ENCODE measurements at regions of chr3 and their contacts with region 1.

Region 1: GRCh38 chr3:14178247-14179113 is at the starts of genes LSM3 and XPC:
- DNase-seq: peak; percentile 97
- ATAC-seq: peak; percentile 99 to 100 (median 100)
- H3K4me3 ChIP-seq: peak within 1 kb of the TSS; percentile 54 to 87 (median 75)
- H3K27ac ChIP-seq: peak within 1 kb of the TSS; percentile 81 to 97 (median 94)
- H3K4me1 ChIP-seq: peaks cover 5 to 50% (median 29%) of the 10 kb centered on the region in 9 donors
- H3K27me3 ChIP-seq: no peaks in the 10 kb centered on the region
- CTCF ChIP-seq: no peak
- total RNA-seq, gene LSM3: 12.4 to 18.0 (median 15.2) TPM
- total RNA-seq, gene XPC: 8.5 to 15.8 (median 11.3) TPM

Region 2: DNA sequence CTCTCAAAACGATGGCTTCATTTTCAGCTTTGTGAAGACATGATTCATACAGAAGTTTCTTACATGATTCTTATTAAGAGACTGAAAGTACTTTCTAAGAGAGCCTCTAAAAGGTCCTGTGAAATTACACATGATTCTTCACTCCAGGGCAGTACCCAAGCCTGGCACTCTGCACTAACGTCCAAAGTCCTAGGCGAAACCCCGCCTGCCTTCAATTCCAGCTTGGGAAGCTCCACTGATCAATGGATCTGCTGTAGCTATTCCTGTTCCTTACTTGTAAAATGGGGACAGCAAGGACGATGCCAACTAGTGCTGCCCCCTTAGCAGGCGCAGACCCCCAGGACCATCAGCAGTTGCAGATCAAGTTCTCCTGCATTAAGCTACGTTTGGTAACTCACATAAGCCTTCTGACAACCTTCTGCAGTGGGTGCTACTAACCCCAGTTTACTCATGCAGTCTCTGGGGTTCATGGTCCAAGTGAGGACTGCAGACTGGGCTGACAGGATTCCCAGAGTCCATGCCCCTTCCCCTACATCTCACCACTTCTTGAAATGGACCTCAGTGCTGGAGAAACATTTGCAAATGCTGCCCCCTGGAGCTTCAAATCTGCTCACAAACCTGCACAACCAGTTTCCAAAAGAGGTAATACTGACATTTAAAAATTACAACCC is 64.4 kb before region 1 on chr3:
- intact Hi-C with region 1: no loop called
- DNase-seq: no peak
- ATAC-seq: no peak
- H3K4me3 ChIP-seq: no peak overlapping the region
- H3K27ac ChIP-seq: no peak overlapping the region
- H3K4me1 ChIP-seq: peaks cover 0 to 12% (median 6%) of the 10 kb centered on the region in 9 donors
- H3K27me3 ChIP-seq: no peaks in the 10 kb centered on the region
- CTCF ChIP-seq: peak in 5 of 9 donors; percentile 6 to 36 (median 14)

Region 3: GRCh38 chr3:14144423-14145075 is 33.9 kb before region 1 on chr3:
- intact Hi-C with region 1: loop called in 3 of 10 experiments (anchors 1 to 2 kb)
- DNase-seq: peak; percentile 43 to 88
- ATAC-seq: peak; percentile 65 to 92 (median 88)
- H3K4me3 ChIP-seq: peak overlapping the region in 6 of 10 donors; percentile 10 to 40 (median 29)
- H3K27ac ChIP-seq: peak overlapping the region; percentile 33 to 93 (median 84)
- H3K4me1 ChIP-seq: peaks cover 14 to 71% (median 37%) of the 10 kb centered on the region in 9 donors
- H3K27me3 ChIP-seq: no peaks in the 10 kb centered on the region
- CTCF ChIP-seq: no peak

Region 4: DNA sequence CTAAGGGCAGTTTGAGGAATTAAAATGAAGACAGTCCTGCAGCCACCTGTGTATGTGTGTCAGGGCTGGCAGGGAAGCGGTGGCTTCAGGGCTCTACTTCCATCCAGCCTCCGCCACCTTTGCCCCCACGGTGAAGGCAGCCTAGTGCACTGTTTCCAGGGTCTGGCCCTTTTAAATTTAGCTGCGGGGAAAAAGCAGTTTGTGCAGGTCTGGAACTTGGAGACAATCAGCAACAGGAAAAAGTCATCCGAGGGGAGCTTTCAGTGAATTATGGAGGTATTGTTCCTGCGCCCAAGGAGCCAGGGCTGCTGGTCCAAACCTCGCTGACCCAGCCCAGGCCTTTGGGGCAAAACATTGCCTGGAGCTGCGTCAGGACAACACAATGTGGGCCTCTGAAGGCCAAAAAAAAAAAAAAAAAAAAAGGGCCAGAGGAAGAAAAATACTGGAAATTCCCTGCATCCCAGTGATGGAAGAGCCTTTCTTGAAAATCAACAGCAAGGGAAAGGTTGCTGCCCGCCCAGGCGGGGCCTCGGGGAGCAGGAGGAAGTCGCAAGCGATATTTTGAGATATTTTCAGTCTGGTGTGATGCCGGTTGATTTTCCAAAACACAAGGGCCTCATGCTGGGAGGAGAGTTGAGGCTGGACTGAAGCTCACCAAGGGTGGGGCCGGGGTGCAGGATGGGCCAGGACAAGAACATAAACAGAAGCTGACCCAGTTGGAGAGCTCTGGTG is 614.8 kb after region 1 on chr3:
- intact Hi-C with region 1: no loop called
- DNase-seq: peak; percentile 51 to 70
- ATAC-seq: peak; percentile 45 to 87 (median 82)
- H3K4me3 ChIP-seq: no peak overlapping the region
- H3K27ac ChIP-seq: peak overlapping the region in 9 of 10 donors; percentile 30 to 71 (median 59)
- H3K4me1 ChIP-seq: peaks cover 14 to 56% (median 35%) of the 10 kb centered on the region in 9 donors
- H3K27me3 ChIP-seq: peaks cover 0 to 21% (median 0%) of the 10 kb centered on the region in 7 donors
- CTCF ChIP-seq: no peak